ENCODE measurements at regions of chr19 and their contacts with region 1.

Region 1: GRCh38 chr19:2869618-2870017 is 2.5 kb downstream of the ZNF556 start:
- DNase-seq: no peak
- H3K4me3 ChIP-seq: no peak overlapping the region
- H3K27ac ChIP-seq: no peak overlapping the region
- H3K4me1 ChIP-seq: no peaks in the 10 kb centered on the region
- H3K27me3 ChIP-seq: no peaks in the 10 kb centered on the region
- CTCF ChIP-seq: no peak

Region 2: DNA sequence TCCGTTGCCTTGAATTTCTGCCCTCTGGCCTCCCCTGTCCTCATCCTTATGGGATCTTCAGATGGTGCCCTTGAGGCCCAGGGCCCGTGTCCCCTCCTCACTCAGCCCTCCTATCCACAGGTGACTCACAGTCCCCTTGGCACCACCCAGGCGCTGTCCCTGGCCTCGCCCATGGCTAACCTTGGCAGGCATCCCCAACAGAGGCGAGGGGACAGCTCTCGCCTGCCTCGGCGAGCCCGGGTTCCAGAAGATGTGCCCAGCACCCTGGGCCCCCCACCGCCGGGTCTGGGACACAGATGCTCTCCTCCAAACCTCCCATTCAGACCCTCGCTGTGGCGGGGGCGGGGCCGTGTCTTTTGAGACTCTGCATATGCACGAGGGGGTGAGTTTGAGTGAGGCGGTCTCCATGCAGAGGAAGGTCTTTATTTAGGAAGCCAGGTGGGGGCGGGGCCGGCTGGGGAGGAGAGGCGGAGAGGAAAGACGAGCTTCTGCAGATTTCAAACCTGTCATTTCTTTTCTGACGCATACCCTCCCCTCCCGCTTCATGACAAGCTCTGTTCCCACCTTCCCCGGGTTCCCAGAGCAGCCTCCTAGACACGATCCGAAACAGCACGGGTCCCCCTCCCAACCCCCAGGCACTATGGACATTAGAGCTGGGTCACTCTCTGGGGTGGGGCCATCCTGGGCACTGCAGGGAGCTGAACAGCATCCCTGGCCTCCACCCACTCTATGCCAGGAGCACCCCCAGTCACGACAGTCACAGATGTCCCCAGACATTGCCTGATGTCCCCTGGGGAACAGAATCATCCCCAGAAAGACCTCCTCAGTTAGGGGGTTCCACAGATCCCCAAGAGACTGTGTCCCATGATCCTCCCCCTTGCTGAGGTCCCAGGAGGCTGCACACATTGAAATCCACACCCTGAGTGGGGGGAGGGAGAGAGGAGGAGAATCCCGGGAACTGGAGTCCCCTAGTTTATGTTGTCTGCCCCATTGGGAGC is 215.6 kb before region 1 on chr19:
- intact Hi-C with region 1: loop called (anchors 5 kb)
- DNase-seq: no peak
- H3K4me3 ChIP-seq: no peak overlapping the region
- H3K27ac ChIP-seq: no peak overlapping the region
- H3K4me1 ChIP-seq: no peaks in the 10 kb centered on the region
- H3K27me3 ChIP-seq: no peaks in the 10 kb centered on the region
- CTCF ChIP-seq: no peak

Region 3: GRCh38 chr19:2887391-2887914 is 17.8 kb after region 1 on chr19:
- intact Hi-C with region 1: no loop called
- DNase-seq: no peak
- H3K4me3 ChIP-seq: peak overlapping the region in 1 of 2 donors; percentile 29
- H3K27ac ChIP-seq: no peak overlapping the region
- H3K4me1 ChIP-seq: no peaks in the 10 kb centered on the region
- H3K27me3 ChIP-seq: no peaks in the 10 kb centered on the region
- CTCF ChIP-seq: peak; percentile 34 to 67 (median 65)